Naive thymus-derived CD4-positive, alpha-beta T cell (primary cell): ENCODE measurements at regions of chr17 and their contacts with region 1.

Region 1: GRCh38 chr17:78168242-78168902 is at the start of gene SYNGR2:
- DNase-seq: peak; percentile 80 to 94 (median 87)
- ATAC-seq: peak; percentile 91
- H3K4me3 ChIP-seq: peak within 1 kb of the TSS; percentile 58
- H3K4me3 Mint-ChIP-seq: peak within 1 kb of the TSS; percentile 64 to 83 (median 73)
- H3K27ac ChIP-seq: peak within 1 kb of the TSS; percentile 89
- H3K27ac Mint-ChIP-seq: peak within 1 kb of the TSS; percentile 31 to 88 (median 66)
- H3K4me1 ChIP-seq: peaks cover 6 to 25% of the 10 kb centered on the region in 2 donors
- H3K4me1 Mint-ChIP-seq: peaks cover 22 to 40% (median 35%) of the 10 kb centered on the region in 7 donors
- H3K27me3 ChIP-seq: no peaks in the 10 kb centered on the region
- H3K27me3 Mint-ChIP-seq: no peaks in the 10 kb centered on the region
- total RNA-seq, gene SYNGR2: 47.6 to 109 (median 58.6) TPM

Region 2: DNA sequence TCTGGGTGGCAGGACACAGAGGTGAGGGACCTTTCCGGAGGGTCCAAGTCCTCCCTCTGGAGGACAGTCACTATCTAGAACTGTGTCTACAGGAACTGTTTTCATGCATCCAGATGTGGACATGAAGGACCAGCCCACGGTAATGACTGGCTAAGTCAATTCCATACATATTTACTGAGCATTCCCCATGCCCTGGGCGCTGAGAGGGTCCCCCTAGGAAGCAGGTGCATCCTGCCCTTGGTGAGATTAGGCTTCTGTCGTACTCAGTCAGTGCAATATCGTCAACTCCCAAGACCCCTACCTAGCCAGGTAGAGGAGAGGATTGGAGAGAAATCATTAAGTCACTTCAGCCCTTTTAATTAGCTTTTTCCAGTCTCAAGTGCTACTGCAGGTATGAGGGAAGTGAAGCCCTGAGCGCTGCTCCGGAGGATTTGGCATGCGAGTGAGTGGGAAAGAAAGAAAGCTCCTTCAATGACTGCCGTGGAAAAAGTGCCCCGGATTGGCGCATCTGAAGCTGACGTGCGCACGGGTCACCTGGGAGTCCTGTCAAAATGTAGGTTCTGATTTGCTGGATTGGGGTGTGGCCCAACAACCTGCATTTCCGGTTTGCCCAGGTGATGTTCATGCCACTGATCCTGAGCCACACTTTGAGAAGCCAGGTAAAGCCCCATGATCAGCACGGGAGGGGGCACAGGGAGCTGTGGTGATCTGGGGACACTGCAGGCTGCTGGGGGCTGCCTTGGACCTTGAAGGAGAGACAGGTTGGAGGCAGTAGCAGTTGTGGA is 577.2 kb before region 1 on chr17:
- CTCF ChIA-PET with region 1: no interaction called
- POLR2A ChIA-PET with region 1: no interaction called
- intact Hi-C with region 1: no loop called
- DNase-seq: no peak
- ATAC-seq: no peak
- H3K4me3 ChIP-seq: no peak overlapping the region
- H3K4me3 Mint-ChIP-seq: no peak overlapping the region
- H3K27ac ChIP-seq: no peak overlapping the region
- H3K27ac Mint-ChIP-seq: no peak overlapping the region
- H3K4me1 ChIP-seq: no peaks in the 10 kb centered on the region
- H3K4me1 Mint-ChIP-seq: peaks cover 7 to 21% (median 8%) of the 10 kb centered on the region in 7 donors
- H3K27me3 ChIP-seq: no peaks in the 10 kb centered on the region
- H3K27me3 Mint-ChIP-seq: peaks cover 0 to 66% (median 4%) of the 10 kb centered on the region in 5 donors

Region 3: DNA sequence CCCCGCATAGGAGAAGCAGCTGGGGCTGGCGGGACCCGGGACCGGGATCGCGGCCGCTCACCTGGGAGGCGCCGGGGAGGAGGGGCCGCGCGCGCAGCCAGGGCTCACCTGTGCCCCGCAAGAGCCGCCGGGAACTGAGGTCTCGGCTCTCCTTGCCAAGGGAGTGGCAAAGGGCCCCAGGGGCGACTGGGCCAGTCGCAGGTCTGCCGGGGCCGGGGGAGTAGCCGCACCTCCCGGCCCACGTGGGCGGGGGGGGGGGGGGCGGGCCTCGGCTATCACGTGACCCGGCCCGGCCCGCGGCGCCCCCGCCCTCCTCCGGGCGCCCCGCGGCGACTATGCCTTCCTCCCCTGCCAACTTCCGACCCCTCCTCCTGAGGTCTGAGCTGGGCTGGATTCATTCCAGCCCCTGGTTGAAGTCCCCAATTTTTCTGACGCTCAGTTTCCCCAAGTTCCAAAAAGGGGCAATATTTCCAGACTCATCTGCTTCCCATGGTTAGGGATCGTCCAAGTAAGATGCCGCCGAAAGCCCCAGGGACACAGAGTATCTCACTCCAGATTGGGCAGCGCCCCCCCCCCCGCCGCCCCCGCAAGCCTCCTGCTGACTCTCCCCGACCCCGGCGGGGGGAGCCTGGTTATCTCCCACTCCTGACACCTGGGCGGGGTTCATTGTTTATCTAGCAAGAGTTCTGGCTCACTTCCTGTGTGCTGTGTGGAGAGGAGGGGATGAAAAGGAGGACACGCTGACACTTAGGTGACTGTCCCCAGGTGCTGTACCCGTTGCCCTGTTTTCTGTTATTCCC is 39.6 kb before region 1 on chr17 and contains the start of gene TMC6:
- CTCF ChIA-PET with region 1: no interaction called
- POLR2A ChIA-PET with region 1: interaction called, 12 read pairs
- intact Hi-C with region 1: loop called (anchors 1 to 5 kb)
- DNase-seq: peak in 8 of 9 donors; percentile 76 to 88 (median 82)
- ATAC-seq: peak; percentile 45
- H3K4me3 ChIP-seq: peak within 1 kb of the TSS; percentile 95
- H3K4me3 Mint-ChIP-seq: peak within 1 kb of the TSS; percentile 89 to 100 (median 99)
- H3K27ac ChIP-seq: peak within 1 kb of the TSS; percentile 77
- H3K27ac Mint-ChIP-seq: peak within 1 kb of the TSS; percentile 95 to 99 (median 97)
- H3K4me1 ChIP-seq: peaks cover 56 to 59% of the 10 kb centered on the region in 2 donors
- H3K4me1 Mint-ChIP-seq: peaks cover 19 to 53% (median 39%) of the 10 kb centered on the region in 7 donors
- H3K27me3 ChIP-seq: no peaks in the 10 kb centered on the region
- H3K27me3 Mint-ChIP-seq: peaks cover 0 to 3% (median 0%) of the 10 kb centered on the region in 5 donors
- total RNA-seq, gene TMC6: 574 to 808 (median 773) TPM

Region 4: DNA sequence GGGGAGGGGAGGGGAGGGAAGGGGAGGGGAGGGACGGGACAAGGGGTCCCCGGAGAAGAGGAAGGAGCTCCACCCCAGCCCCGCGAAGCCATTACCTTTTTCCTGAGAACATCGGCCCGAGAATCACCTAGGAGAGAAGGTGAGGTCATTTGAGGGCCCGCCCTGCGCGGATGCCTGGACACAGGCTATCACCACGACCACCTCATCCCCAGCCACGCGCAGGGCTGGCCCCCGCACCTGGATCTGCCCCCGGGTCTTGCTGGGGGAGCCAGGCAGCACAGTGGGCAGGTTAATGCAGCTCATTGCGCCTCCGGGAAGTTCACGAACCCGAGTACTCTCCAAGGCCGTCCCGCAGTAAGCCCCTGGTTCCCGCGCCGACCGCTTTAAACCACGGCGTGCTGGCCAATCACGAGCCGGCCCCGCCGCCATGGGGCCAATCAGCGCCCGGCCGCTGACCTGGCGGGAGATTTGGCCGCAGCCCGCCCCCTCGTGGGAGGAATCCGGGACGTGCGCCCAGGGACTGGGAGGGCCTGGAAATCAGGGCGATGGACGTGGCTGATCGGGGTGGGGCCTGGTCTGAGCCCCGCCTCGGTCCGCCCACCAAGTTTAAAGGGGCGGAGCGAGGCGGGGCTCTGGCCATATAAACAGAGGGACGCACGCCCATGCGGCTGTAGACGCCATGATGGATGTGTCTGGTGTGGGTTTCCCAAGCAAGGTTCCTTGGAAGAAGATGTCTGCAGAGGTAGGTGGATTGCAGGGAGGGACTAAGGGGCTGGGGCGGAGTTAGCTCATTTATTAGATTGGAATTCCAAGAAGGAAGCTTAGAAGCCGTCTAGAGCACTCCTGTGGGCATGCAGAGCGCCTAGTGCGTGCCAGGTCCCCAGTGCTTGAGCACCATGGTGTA is 18.6 kb after region 1 on chr17 and contains the starts of genes AFMID and TK1:
- CTCF ChIA-PET with region 1: no interaction called
- POLR2A ChIA-PET with region 1: no interaction called
- intact Hi-C with region 1: loop called in 1 of 2 experiments (anchors 2 kb)
- DNase-seq: peak; percentile 33 to 96 (median 56)
- ATAC-seq: peak; percentile 95
- H3K4me3 ChIP-seq: peak within 1 kb of the TSS; percentile 62
- H3K4me3 Mint-ChIP-seq: peak within 1 kb of the TSS; percentile 75 to 91 (median 85)
- H3K27ac ChIP-seq: no peak within 1 kb of the TSS
- H3K27ac Mint-ChIP-seq: peak within 1 kb of the TSS in 8 of 9 donors; percentile 14 to 81 (median 63)
- H3K4me1 ChIP-seq: peaks cover 0 to 5% of the 10 kb centered on the region in 2 donors
- H3K4me1 Mint-ChIP-seq: peaks cover 0 to 39% (median 13%) of the 10 kb centered on the region in 7 donors
- H3K27me3 ChIP-seq: no peaks in the 10 kb centered on the region
- H3K27me3 Mint-ChIP-seq: no peaks in the 10 kb centered on the region
- total RNA-seq, gene AFMID: 1.2 to 19.2 (median 3.0) TPM
- total RNA-seq, gene TK1: 0.29 to 57.7 (median 1.0) TPM in 3 of 5 experiments, not detected in the others

Region 5: DNA sequence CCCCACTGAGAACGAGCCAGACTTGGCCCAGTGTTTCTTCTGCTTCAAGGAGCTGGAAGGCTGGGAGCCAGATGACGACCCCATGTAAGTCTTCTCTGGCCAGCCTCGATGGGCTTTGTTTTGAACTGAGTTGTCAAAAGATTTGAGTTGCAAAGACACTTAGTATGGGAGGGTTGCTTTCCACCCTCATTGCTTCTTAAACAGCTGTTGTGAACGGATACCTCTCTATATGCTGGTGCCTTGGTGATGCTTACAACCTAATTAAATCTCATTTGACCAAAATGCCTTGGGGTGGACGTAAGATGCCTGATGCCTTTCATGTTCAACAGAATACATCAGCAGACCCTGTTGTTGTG is 46.3 kb after region 1 on chr17:
- CTCF ChIA-PET with region 1: interaction called, 4 read pairs
- POLR2A ChIA-PET with region 1: no interaction called
- intact Hi-C with region 1: loop called in 1 of 2 experiments (anchors 5 kb)
- DNase-seq: no peak
- ATAC-seq: no peak
- H3K4me3 ChIP-seq: no peak overlapping the region
- H3K4me3 Mint-ChIP-seq: peak overlapping the region in 9 of 10 donors; percentile 44 to 97 (median 68)
- H3K27ac ChIP-seq: no peak overlapping the region
- H3K27ac Mint-ChIP-seq: peak overlapping the region in 1 of 9 donors; percentile 87
- H3K4me1 ChIP-seq: peaks cover 5 to 6% of the 10 kb centered on the region in 2 donors
- H3K4me1 Mint-ChIP-seq: peaks cover 0 to 25% (median 4%) of the 10 kb centered on the region in 7 donors
- H3K27me3 ChIP-seq: no peaks in the 10 kb centered on the region
- H3K27me3 Mint-ChIP-seq: no peaks in the 10 kb centered on the region

Region 6: DNA sequence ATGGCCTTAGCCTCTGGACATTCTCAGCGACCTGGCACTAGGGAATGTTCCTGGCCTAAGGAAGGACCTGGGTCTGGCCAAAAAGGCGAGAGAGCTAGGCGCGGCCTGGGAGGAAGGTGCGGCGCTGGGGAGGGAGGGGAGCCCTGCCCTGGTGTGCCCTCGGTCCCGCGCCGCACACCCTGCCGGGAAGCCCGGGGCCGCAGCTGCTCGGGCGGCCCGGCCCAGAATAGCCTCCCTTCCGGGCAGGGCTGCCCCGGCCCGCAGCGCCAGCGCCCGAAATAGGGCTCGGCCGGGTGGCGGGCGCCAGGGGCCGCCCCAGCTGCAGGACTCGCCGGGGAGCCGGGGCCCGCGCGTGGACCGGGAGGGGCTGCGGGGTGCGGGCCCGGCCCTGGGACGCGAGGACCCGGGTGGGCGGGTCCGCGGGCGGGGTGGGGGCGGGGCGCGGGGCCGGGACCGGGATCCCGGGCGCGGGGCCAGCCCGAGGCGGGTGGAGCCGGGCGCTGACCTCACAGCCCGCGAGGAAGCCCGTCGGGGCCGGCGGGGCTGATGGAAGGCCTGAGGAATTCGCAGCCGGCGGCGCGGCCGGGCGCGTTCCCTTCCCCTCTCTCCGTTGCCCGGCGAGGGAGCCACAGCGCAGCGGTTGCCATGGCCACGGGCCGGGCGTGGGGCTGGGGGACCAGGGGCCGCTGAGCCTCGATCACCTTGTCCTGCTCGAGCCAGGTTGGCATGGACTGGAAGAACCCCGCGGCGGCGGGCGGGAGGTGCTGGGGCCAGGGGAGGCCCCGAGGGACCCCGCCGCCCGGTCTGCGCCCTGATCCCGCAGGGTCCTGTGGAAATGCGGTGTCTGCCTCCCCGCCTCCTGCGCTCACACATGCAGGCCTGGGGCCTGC is 173.4 kb after region 1 on chr17:
- CTCF ChIA-PET with region 1: no interaction called
- POLR2A ChIA-PET with region 1: no interaction called
- intact Hi-C with region 1: no loop called
- DNase-seq: peak in 2 of 9 donors; percentile 28 to 48
- ATAC-seq: peak; percentile 15
- H3K4me3 ChIP-seq: peak overlapping the region; percentile 24
- H3K4me3 Mint-ChIP-seq: peak overlapping the region in 8 of 10 donors; percentile 53 to 85 (median 72)
- H3K27ac ChIP-seq: peak overlapping the region; percentile 82
- H3K27ac Mint-ChIP-seq: peak overlapping the region in 5 of 9 donors; percentile 32 to 98 (median 97)
- H3K4me1 ChIP-seq: peaks cover 43 to 67% of the 10 kb centered on the region in 2 donors
- H3K4me1 Mint-ChIP-seq: peaks cover 54 to 75% (median 62%) of the 10 kb centered on the region in 7 donors
- H3K27me3 ChIP-seq: no peaks in the 10 kb centered on the region
- H3K27me3 Mint-ChIP-seq: peaks cover 0 to 15% (median 0%) of the 10 kb centered on the region in 5 donors